Activated CD4-positive, alpha-beta T cell treated with anti-CD3 and anti-CD28 coated beads, Interleukin-2, amount 10 ng/mL, durations not matched to agents 7 days and 5 days (primary cell): ENCODE measurements at regions of chr3 and their contacts with region 1.

Region 1: GRCh38 chr3:129003578-129004160 is 2.6 kb downstream of the EFCC1 start:
- DNase-seq: peak; percentile 49
- H3K4me3 Mint-ChIP-seq: no peak overlapping the region
- H3K27ac Mint-ChIP-seq: no peak overlapping the region
- H3K4me1 Mint-ChIP-seq: peaks cover 49% of the 10 kb centered on the region
- H3K27me3 Mint-ChIP-seq: peaks cover 45% of the 10 kb centered on the region

Region 2: DNA sequence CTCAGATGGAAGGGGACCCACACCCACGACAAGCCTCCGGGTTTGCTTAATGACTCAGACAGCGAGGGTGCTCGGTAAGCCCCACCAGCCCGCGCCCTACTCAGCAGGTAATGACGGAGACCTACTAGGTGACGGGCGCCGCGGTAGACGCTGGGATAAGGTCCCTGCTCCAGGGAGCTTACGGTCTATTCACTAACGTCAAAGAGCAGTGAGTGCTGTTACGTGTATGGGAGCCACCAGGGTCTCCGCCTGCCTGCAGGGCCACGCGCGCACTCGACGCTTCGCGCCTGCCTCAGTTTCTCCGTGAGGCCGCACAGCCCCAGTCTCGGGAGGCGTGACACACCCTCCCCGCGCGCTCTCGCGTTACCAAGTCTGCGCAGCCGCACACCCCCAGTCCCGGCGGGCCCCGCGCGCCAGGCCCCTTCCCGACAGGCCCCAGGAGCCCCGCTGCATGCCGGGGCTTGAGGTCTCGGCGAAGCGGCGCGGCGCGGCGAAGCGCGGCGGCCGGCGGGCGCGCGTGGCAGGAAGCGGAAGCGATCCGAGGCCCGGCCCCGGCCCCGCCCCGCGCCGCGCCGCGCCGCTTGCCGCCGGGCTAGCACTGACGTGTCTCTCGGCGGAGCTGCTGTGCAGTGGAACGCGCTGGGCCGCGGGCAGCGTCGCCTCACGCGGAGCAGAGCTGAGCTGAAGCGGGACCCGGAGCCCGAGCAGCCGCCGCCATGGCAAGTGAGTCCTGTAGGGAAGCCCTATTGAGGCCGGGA is 951.7 kb before region 1 on chr3 and contains the start of gene SEC61A1:
- CTCF ChIA-PET with region 1: no interaction called
- POLR2A ChIA-PET with region 1: no interaction called
- DNase-seq: peak; percentile 95
- H3K4me3 Mint-ChIP-seq: peak within 1 kb of the TSS; percentile 99
- H3K27ac Mint-ChIP-seq: peak within 1 kb of the TSS; percentile 99
- H3K4me1 Mint-ChIP-seq: peaks cover 44% of the 10 kb centered on the region
- H3K27me3 Mint-ChIP-seq: peaks cover 11% of the 10 kb centered on the region
- total RNA-seq, gene SEC61A1: 159 to 167 TPM

Region 3: GRCh38 chr3:128946411-128946810 is 57.3 kb before region 1 on chr3:
- CTCF ChIA-PET with region 1: no interaction called
- POLR2A ChIA-PET with region 1: no interaction called
- DNase-seq: no peak
- H3K4me3 Mint-ChIP-seq: no peak overlapping the region
- H3K27ac Mint-ChIP-seq: no peak overlapping the region
- H3K4me1 Mint-ChIP-seq: no peaks in the 10 kb centered on the region
- H3K27me3 Mint-ChIP-seq: peaks cover 6% of the 10 kb centered on the region

Region 4: GRCh38 chr3:128993461-128994173 is 10.1 kb before region 1 on chr3 and contains the start of gene CFAP92:
- CTCF ChIA-PET with region 1: interaction called, 10 read pairs
- POLR2A ChIA-PET with region 1: no interaction called
- DNase-seq: peak; percentile 93
- H3K4me3 Mint-ChIP-seq: peak within 1 kb of the TSS; percentile 43
- H3K27ac Mint-ChIP-seq: peak within 1 kb of the TSS; percentile 76
- H3K4me1 Mint-ChIP-seq: peaks cover 38% of the 10 kb centered on the region
- H3K27me3 Mint-ChIP-seq: peaks cover 10% of the 10 kb centered on the region
- total RNA-seq, gene CFAP92: 0.10 TPM in 1 of 2 experiments, not detected in the other

Region 5: DNA sequence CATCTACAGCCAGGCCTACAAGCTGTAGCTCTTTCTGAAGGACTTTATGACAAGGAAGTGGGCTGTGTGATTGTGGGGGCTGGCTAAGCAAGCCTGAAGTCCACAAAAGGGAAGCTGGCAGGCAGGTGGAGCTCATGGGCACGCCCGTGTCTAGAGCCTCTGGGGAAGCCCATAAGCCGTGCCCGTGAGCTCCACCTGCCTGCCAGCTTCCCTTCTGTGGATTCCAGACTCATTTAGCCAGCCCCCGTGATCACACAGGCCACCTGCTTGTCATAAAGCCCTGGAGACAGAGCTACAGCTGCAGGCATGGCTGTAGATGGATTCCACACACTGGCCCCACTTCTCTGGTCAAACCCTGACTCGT is 12.7 kb after region 1 on chr3:
- CTCF ChIA-PET with region 1: interaction called, 31 read pairs
- POLR2A ChIA-PET with region 1: interaction called, 3 read pairs
- DNase-seq: peak; percentile 69
- H3K4me3 Mint-ChIP-seq: peak overlapping the region; percentile 70
- H3K27ac Mint-ChIP-seq: peak overlapping the region; percentile 98
- H3K4me1 Mint-ChIP-seq: peaks cover 37% of the 10 kb centered on the region
- H3K27me3 Mint-ChIP-seq: no peaks in the 10 kb centered on the region

Region 6: DNA sequence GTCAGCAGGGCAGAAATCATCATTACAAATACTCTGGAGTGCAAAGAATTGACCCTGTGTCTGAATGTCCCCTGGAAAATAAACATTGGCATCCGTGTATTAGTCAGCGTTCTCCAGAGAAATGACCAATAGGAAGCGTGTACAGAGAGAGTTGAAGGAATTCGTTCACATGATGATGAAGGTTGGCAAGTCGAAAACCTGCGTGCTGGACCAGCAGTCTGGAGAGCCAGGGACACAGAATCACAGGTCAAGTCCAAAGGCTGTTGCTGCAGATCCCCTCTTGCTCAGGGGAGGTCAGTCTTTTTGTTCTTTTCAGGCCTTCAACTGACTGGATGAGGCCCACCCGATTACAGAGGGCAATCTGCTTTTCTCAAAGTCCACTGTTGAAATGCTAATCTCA is 73.6 kb after region 1 on chr3:
- CTCF ChIA-PET with region 1: no interaction called
- POLR2A ChIA-PET with region 1: no interaction called
- DNase-seq: no peak
- H3K4me3 Mint-ChIP-seq: no peak overlapping the region
- H3K27ac Mint-ChIP-seq: no peak overlapping the region
- H3K4me1 Mint-ChIP-seq: peaks cover 12% of the 10 kb centered on the region
- H3K27me3 Mint-ChIP-seq: peaks cover under 1% of the 10 kb centered on the region

Region 7: DNA sequence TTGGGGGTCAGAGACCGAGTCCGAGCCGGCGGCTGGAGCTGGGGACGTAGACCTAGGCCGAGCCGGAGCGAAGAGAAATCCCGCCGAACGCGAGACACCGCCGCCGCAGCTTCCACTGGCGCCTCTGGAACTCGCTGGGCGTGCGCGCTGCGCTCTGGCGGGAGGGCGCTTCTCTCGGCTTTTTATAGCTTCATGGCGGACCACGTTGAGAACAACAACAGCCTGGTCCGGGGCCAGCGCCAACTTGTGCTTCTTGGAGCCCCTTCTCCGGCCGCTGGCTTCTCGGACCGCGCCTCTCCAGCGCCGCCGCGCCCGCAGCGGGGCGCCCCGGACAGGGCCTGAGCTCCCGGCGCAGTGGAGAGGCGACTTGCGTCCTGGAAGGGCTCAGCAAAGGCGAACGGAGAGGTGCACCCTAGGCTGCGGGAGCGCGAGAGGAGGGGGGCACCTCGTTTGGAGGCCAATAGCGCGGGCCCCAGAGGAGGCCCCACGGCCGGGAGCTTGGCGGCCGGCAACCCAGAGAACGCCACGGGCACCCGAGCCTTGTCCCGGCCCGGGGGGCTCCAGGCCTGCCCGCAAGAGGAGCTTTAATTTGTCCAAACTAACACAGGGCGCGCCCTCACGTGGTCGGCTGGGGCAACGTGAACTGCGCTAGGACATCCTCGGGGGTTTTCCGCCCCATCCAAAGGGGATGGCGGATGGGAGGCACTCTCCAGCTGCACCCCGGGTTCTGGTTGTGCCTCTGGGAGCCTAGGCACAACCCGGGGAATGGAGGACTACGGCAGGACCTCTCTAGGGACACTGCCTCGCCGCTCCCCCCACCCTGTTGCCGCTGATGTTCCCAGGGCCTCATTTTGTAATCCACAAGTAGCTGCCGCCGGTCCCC is 312.7 kb after region 1 on chr3:
- CTCF ChIA-PET with region 1: no interaction called
- POLR2A ChIA-PET with region 1: no interaction called
- DNase-seq: peak; percentile 91
- H3K4me3 Mint-ChIP-seq: peak overlapping the region; percentile 83
- H3K27ac Mint-ChIP-seq: peak overlapping the region; percentile 89
- H3K4me1 Mint-ChIP-seq: peaks cover 38% of the 10 kb centered on the region
- H3K27me3 Mint-ChIP-seq: no peaks in the 10 kb centered on the region